PC-3 (cell line): ENCODE measurements at regions of chr2 and their contacts with region 1.

Region 1: DNA sequence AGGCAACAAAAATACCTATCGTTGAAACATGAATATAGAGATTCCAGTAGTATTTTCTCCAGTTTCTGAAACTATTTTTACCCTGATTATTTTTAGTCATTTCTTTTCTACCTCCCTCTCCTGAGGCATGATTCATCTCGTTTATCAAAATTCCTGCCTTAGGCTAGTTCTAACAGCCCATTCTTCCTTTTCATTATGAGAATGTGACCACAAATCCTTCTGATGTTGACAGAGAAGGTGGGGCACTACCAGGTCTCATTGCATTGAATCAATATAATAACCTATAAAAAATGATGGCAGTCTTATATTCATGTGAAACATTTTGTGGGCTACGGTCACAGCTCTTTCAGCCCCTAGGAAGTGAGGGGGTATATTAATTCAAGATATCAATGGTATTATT is 406.4 kb upstream of the UBE2E3 start:
- DNase-seq: peak; percentile 97
- ATAC-seq: peak; percentile 89
- H3K4me3 ChIP-seq: no peak overlapping the region
- H3K27ac ChIP-seq: peak overlapping the region; percentile 73
- H3K4me1 ChIP-seq: peaks cover 48% of the 10 kb centered on the region
- H3K27me3 ChIP-seq: no peaks in the 10 kb centered on the region
- CTCF ChIP-seq: no peak

Region 2: GRCh38 chr2:179440642-179441251 is 1133.2 kb before region 1 on chr2:
- CTCF ChIA-PET with region 1: no interaction called
- POLR2A ChIA-PET with region 1: no interaction called
- intact Hi-C with region 1: no loop called
- DNase-seq: peak; percentile 76
- ATAC-seq: peak; percentile 27; the same call in 1 of the 2 replicates
- H3K4me3 ChIP-seq: no peak overlapping the region
- H3K27ac ChIP-seq: no peak overlapping the region
- H3K4me1 ChIP-seq: peaks cover 4% of the 10 kb centered on the region
- H3K27me3 ChIP-seq: no peaks in the 10 kb centered on the region
- CTCF ChIP-seq: peak; percentile 84

Region 3: GRCh38 chr2:180367815-180368214 is 206.1 kb before region 1 on chr2:
- CTCF ChIA-PET with region 1: no interaction called
- POLR2A ChIA-PET with region 1: no interaction called
- intact Hi-C with region 1: loop called (anchors 5 kb)
- DNase-seq: peak; percentile 68
- ATAC-seq: peak; percentile 93
- H3K4me3 ChIP-seq: no peak overlapping the region
- H3K27ac ChIP-seq: peak overlapping the region; percentile 71
- H3K4me1 ChIP-seq: peaks cover 25% of the 10 kb centered on the region
- H3K27me3 ChIP-seq: no peaks in the 10 kb centered on the region
- CTCF ChIP-seq: no peak

Region 4: DNA sequence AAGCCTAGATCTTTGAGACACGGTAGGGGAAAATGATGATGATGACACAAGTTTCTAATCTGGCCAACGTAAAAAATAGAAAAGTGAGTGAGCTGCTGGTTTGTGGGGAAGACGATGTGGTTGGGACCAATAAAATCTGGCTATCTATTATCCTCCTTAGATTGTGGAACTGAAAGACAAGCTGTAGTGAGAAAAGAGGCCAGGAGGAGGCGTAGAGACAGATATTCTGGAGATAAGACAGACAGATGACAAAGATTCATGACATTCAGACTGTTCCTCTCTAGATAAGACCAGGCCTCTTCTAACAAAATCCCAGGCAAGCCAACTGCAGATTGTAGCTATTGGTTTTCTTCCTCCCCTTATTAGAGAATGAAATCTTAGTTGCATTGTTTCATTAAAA is 30.1 kb after region 1 on chr2:
- CTCF ChIA-PET with region 1: no interaction called
- POLR2A ChIA-PET with region 1: no interaction called
- intact Hi-C with region 1: no loop called
- DNase-seq: peak; percentile 62
- ATAC-seq: peak; percentile 49; the same call in 1 of the 2 replicates
- H3K4me3 ChIP-seq: no peak overlapping the region
- H3K27ac ChIP-seq: no peak overlapping the region
- H3K4me1 ChIP-seq: no peaks in the 10 kb centered on the region
- H3K27me3 ChIP-seq: no peaks in the 10 kb centered on the region
- CTCF ChIP-seq: peak; percentile 67

Region 5: GRCh38 chr2:181026614-181027013 is 452.7 kb after region 1 on chr2:
- CTCF ChIA-PET with region 1: no interaction called
- POLR2A ChIA-PET with region 1: interaction called, 19 read pairs
- intact Hi-C with region 1: no loop called
- DNase-seq: no peak
- ATAC-seq: no peak
- H3K4me3 ChIP-seq: no peak overlapping the region
- H3K27ac ChIP-seq: no peak overlapping the region
- H3K4me1 ChIP-seq: no peaks in the 10 kb centered on the region
- H3K27me3 ChIP-seq: no peaks in the 10 kb centered on the region
- CTCF ChIP-seq: no peak